Calu3 (cell line): ENCODE measurements at regions of chr5 and their contacts with region 1.

Region 1: DNA sequence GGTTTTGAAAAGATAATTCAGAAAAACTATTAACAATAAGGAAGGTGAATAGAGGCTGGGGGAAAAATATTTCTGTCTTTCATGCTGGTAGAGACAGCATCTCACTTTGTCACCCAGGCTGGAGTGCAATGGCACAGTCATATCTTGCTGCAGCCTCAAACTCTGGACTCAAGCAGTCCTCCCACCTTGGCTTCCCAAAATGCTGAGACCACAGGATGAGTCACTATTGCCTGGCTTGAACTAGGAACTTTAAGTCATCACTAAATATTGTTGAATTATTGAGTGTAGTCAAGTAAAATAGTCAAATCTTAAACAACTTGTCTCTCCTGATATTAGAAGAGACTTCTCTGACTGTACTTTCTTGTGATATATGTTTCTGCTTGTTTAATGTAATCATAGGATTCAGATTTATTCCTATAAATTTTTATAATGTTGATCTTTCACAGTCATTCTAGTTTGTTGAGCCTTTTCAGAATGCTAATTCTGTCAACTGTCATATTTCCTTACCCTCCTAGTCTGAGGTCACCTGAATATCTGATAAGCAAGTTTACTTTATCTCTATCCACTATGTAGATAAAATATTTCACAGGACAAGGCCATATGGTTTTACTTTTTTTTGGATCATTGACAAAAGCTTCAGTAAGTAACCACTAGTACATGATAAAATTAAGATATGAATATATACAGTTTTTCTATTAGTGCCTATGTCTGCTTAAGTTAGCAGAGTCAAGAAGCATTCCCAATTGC is 1696.5 kb downstream of the MAT2B start:
- DNase-seq: no peak
- H3K4me3 Mint-ChIP-seq: no peak overlapping the region
- H3K27ac Mint-ChIP-seq: no peak overlapping the region
- H3K4me1 Mint-ChIP-seq: no peaks in the 10 kb centered on the region
- H3K27me3 Mint-ChIP-seq: no peaks in the 10 kb centered on the region
- CTCF ChIP-seq: no peak

Region 2: DNA sequence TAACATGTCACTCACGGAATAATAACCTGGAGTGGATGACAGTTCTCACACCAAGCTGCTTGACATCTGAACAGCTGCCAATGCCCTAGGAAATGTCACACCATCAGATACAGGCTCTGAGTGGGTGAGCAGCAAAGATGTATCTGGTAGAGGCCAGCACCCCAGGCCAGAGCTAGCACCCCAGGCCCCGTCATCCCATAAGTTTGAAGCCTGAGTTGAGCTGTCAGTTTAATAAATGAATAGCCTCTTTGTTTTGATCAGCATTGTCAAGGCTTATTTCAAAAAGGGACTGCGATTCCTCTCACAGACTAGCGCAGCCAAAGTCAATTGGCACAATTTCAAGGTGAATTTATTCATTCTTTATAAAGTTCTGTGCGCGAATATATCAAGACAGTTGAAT is 369.4 kb before region 1 on chr5:
- CTCF ChIA-PET with region 1: no interaction called
- intact Hi-C with region 1: no loop called
- DNase-seq: no peak
- H3K4me3 Mint-ChIP-seq: no peak overlapping the region
- H3K27ac Mint-ChIP-seq: no peak overlapping the region
- H3K4me1 Mint-ChIP-seq: no peaks in the 10 kb centered on the region
- H3K27me3 Mint-ChIP-seq: no peaks in the 10 kb centered on the region
- CTCF ChIP-seq: no peak

Region 3: GRCh38 chr5:164962329-164962961 is 239.5 kb before region 1 on chr5:
- CTCF ChIA-PET with region 1: no interaction called
- intact Hi-C with region 1: loop called (anchors 5 kb)
- DNase-seq: no peak
- H3K4me3 Mint-ChIP-seq: no peak overlapping the region
- H3K27ac Mint-ChIP-seq: no peak overlapping the region
- H3K4me1 Mint-ChIP-seq: no peaks in the 10 kb centered on the region
- H3K27me3 Mint-ChIP-seq: no peaks in the 10 kb centered on the region
- CTCF ChIP-seq: no peak

Region 4: DNA sequence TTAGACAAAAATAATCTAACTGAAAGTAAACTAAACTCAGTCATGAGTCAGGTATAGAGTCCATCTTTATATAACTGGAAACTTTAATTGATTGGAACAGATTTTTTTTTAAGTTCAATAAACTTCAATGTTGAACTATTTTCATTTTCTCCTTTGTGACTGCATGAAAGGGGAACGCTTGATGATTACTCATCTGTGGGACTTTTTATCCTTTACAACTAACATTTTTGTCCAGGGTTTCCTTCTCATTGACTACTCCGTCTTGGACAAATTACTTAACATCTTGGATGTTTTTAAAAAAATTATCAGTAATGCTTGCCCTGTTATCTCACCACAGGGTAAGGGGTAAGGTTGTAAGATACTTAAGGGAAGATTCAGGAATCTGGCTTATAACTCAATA is 38.1 kb before region 1 on chr5:
- CTCF ChIA-PET with region 1: no interaction called
- intact Hi-C with region 1: loop called (anchors 1 kb)
- DNase-seq: no peak
- H3K4me3 Mint-ChIP-seq: no peak overlapping the region
- H3K27ac Mint-ChIP-seq: no peak overlapping the region
- H3K4me1 Mint-ChIP-seq: no peaks in the 10 kb centered on the region
- H3K27me3 Mint-ChIP-seq: no peaks in the 10 kb centered on the region
- CTCF ChIP-seq: no peak